A549 (cell line): ENCODE measurements at regions of chr3 and their contacts with region 1.

Region 1: DNA sequence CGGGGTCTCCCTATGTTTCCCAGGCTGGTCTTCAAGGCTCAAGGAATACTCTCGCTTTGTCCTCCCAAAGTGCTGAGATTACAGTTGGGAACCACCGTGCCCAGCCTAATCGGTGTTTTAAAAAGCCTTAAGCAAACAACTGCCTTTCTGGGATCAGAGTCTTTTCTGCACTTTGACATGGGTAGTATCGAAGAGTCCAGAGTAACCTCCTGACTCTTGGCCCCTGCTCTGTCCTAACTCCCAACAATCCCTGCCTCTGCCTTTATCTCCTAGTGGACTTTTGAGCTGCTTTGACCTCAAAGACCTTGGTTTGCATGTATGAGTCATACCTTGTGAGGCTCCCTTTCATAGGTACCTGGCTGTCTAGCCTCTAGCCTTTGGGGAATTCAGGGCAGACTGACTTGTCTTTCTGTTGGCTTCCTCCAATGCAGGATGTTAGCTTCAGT is 21.0 kb upstream of the HACD2 start:
- DNase-seq: peak; percentile 58 to 80
- ATAC-seq: peak; percentile 59 to 67
- H3K4me3 ChIP-seq: peak overlapping the region; percentile 10; the same call in 1 of the 3 replicates
- H3K27ac ChIP-seq: peak overlapping the region; percentile 90 to 93
- H3K4me1 ChIP-seq: peaks cover 60% of the 10 kb centered on the region
- CTCF ChIP-seq: no peak
- EP300 ChIP-seq: no peak
- POLR2A ChIP-seq: no peak
- RAD21 ChIP-seq: no peak

Region 2: GRCh38 chr3:123584988-123585937 is 20.5 kb before region 1 on chr3 and contains the start of gene HACD2:
- CTCF ChIA-PET with region 1: interaction called, 7 read pairs
- POLR2A ChIA-PET with region 1: interaction called, 28 read pairs
- DNase-seq: peak; percentile 82 to 98
- ATAC-seq: peak; percentile 89 to 96
- H3K4me3 ChIP-seq: peak within 1 kb of the TSS; percentile 86
- H3K27ac ChIP-seq: peak within 1 kb of the TSS; percentile 98 to 100
- H3K4me1 ChIP-seq: peaks cover 22% of the 10 kb centered on the region
- CTCF ChIP-seq: no peak
- EP300 ChIP-seq: no peak
- POLR2A ChIP-seq: peak; percentile 85
- RAD21 ChIP-seq: no peak; a peak in 1 of 5 replicates
- polyA plus RNA-seq, gene HACD2: 90.2 and 97.7 TPM in 2 replicates